A549 (cell line): ENCODE measurements at regions of chr2 and their contacts with region 1.

Region 1: DNA sequence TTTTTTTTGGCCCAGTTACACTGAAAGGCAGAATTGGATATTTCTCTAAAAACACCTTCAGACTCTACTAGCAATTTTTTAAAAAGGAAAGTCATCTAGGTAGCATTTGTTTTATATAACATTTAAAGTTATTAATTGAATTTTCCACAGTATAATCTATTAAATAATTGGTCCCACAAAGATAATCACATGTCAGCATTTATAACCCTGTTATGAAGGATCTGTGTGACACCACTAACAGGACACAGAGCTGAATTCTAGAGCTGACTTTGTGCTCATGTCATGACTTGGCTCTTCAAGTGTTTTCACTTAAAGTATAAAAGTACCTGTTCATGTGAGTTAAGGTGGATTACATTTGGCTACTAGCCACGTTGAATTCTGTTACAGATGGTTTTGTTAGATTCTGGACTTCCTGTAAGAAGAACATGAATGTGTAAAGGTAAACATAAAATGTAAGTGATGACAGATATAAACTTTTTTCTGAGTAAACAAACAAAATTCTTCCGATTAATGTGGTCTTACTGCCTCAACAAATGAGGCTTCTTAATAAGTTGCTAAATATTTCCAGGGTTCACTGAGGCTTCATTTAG is 69.1 kb upstream of the PROKR1 start:
- DNase-seq: no peak
- ATAC-seq: no peak
- H3K4me3 ChIP-seq: no peak overlapping the region
- H3K27ac ChIP-seq: no peak overlapping the region
- H3K4me1 ChIP-seq: no peaks in the 10 kb centered on the region
- CTCF ChIP-seq: no peak
- EP300 ChIP-seq: no peak
- POLR2A ChIP-seq: no peak
- RAD21 ChIP-seq: no peak

Region 2: DNA sequence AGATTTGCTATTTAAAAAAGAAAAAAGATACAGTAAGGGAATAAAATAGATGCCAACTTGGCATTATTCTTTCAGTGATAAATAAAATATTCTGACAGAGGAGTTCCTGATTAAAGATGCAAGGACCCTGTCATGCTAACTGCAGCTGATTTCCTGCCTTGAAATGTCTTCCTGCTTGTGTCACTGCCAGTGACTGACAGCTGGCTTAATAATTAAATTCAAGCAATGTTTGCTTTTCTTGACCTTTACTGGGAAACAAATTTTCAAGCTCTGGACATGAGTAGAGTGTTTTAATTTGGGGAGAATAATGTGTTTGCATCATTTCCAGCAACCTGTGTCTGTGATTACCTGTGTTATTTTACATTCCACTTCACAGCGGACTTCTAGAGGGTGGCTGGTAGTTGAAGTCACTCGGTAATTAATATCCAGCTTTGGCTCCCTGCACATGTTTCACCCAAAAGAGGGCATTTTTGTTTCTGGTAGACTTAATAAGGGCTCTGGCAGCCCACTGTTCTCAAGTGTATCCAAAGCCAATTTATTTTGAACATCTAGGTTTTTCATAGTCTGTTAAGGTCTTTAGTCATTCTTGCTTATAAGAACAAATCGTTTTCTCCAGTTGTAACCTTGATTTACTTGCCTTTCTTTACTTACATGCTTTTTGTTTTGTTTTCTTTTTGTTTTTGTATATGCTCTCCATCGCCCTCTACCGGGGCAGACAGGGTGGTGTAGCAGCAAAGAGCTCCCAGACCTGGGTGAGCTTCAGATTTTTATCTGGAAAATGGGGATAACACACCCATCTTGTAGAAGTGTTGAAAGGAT is 20.6 kb after region 1 on chr2:
- CTCF ChIA-PET with region 1: interaction called, 14 read pairs
- POLR2A ChIA-PET with region 1: no interaction called
- DNase-seq: peak; percentile 19 to 59
- ATAC-seq: peak; percentile 70 to 89; a peak in 4 of 6 replicates
- H3K4me3 ChIP-seq: no peak overlapping the region
- H3K27ac ChIP-seq: no peak overlapping the region
- H3K4me1 ChIP-seq: peaks cover 8% of the 10 kb centered on the region; the same call in 2 of the 3 replicates
- CTCF ChIP-seq: peak; percentile 80
- EP300 ChIP-seq: no peak
- POLR2A ChIP-seq: no peak
- RAD21 ChIP-seq: peak; percentile 46 to 50; a peak in 4 of 5 replicates

Region 3: DNA sequence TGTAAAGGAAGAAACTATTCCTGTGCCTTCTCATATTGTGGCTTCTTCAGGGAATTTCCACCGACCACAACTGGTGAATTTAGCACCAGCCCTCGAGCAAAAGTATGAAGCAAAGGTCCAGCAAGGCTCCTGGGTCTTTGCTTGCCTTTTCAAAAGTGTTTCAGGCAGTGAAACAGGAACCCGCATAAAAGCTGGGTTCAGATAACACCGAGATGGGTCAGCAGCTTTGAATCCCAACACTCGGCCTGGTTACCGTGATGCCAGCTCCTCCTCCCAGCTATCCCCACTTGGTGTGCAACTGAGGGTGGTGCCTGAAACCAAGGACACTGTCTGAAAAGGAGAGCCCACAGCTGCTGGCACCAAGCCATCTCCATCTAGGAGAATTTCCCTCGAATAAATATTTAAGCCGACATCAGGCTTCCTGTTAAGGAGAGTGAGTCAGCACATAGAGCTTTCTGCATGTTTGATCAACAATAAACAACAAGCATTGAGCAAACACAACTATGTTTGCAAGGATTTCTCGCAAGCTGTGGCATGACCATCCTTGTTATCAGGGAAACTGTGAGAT is 508.2 kb after region 1 on chr2:
- CTCF ChIA-PET with region 1: no interaction called
- POLR2A ChIA-PET with region 1: no interaction called
- DNase-seq: peak; percentile 80 to 97
- ATAC-seq: peak; percentile 87 to 90
- H3K4me3 ChIP-seq: no peak overlapping the region
- H3K27ac ChIP-seq: peak overlapping the region; percentile 71 to 86
- H3K4me1 ChIP-seq: peaks cover 57% of the 10 kb centered on the region
- CTCF ChIP-seq: no peak
- EP300 ChIP-seq: peak; percentile 85 to 86; a peak in 3 of 5 replicates
- POLR2A ChIP-seq: no peak
- RAD21 ChIP-seq: peak; percentile 36 to 57